ENCODE measurements at regions of chr11 and their contacts with region 1.

Region 1: DNA sequence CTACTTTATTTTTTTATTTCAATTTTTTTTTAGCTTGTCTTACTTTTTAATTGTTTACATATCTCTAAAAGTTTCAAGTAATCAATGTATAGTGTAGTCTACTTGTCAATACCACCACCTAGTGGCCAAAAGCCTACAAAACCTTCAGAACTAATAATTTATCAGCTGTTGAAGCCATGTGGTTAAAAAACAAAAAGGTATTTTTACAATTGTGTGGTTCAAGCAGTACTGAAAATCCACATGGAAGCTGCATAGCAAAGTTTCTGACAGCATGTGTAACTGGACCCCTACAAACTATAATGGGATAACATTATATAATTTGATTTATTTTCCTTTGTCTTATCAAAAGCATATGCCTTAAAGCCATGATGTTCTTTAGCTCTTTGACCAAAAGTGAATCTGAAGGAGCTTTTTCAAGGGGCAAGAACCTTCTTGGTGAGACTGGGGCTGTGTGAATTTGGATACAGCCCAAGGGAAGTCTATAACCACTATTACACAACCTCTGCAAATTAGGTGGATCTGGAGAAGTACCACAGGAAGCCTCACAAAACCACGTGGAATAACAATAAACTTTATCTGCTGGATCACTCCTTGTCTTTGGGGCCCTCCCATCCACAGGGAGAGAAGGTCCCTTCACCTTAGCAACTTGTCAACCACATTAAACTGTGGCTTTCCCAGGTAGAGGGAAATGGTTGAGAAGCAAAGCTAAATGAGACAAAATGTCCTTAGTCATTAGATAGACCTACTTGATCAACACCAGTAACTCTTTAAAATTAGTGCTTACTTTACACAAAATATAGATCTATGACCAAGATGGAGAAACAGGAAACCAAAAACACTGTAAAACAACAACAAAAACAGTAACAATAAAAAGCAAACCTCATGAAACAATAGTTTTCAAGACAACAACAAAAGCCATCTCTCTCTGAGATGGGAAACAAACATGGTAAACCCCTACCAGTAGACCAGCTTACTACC is 9.9 kb downstream of the NARS2 start:
- DNase-seq: peak in 7 of 9 donors; percentile 37 to 66 (median 60)
- ATAC-seq: peak; percentile 83
- H3K4me3 ChIP-seq: no peak overlapping the region
- H3K4me3 Mint-ChIP-seq: peak overlapping the region in 2 of 10 donors; percentile 23 to 31
- H3K27ac ChIP-seq: no peak overlapping the region
- H3K27ac Mint-ChIP-seq: peak overlapping the region in 5 of 9 donors; percentile 30 to 84 (median 58)
- H3K4me1 ChIP-seq: peaks cover 0 to 13% of the 10 kb centered on the region in 2 donors
- H3K4me1 Mint-ChIP-seq: peaks cover 22 to 50% (median 36%) of the 10 kb centered on the region in 7 donors
- H3K27me3 ChIP-seq: no peaks in the 10 kb centered on the region
- H3K27me3 Mint-ChIP-seq: no peaks in the 10 kb centered on the region

Region 2: GRCh38 chr11:78045851-78046485 is 518.8 kb before region 1 on chr11:
- CTCF ChIA-PET with region 1: no interaction called
- POLR2A ChIA-PET with region 1: no interaction called
- intact Hi-C with region 1: loop called in 1 of 2 experiments (anchors 1 kb)
- DNase-seq: peak; percentile 66 to 92 (median 83)
- ATAC-seq: peak; percentile 97
- H3K4me3 ChIP-seq: peak overlapping the region; percentile 57
- H3K4me3 Mint-ChIP-seq: peak overlapping the region; percentile 49 to 78 (median 73)
- H3K27ac ChIP-seq: no peak overlapping the region
- H3K27ac Mint-ChIP-seq: peak overlapping the region in 4 of 9 donors; percentile 4 to 67 (median 43)
- H3K4me1 ChIP-seq: peaks cover 0 to 10% of the 10 kb centered on the region in 2 donors
- H3K4me1 Mint-ChIP-seq: peaks cover 4 to 17% (median 9%) of the 10 kb centered on the region in 7 donors
- H3K27me3 ChIP-seq: no peaks in the 10 kb centered on the region
- H3K27me3 Mint-ChIP-seq: no peaks in the 10 kb centered on the region

Region 3: GRCh38 chr11:78139422-78140391 is 425.1 kb before region 1 on chr11 and contains the start of gene ALG8:
- CTCF ChIA-PET with region 1: interaction called, 3 read pairs
- POLR2A ChIA-PET with region 1: no interaction called
- intact Hi-C with region 1: loop called (anchors 2 kb)
- DNase-seq: peak; percentile 94 to 97 (median 96)
- ATAC-seq: peak; percentile 95
- H3K4me3 ChIP-seq: peak within 1 kb of the TSS; percentile 88
- H3K4me3 Mint-ChIP-seq: peak within 1 kb of the TSS; percentile 85 to 98 (median 95)
- H3K27ac ChIP-seq: peak within 1 kb of the TSS; percentile 82
- H3K27ac Mint-ChIP-seq: peak within 1 kb of the TSS; percentile 87 to 98 (median 93)
- H3K4me1 ChIP-seq: peaks cover 8 to 13% of the 10 kb centered on the region in 2 donors
- H3K4me1 Mint-ChIP-seq: peaks cover 23 to 51% (median 42%) of the 10 kb centered on the region in 7 donors
- H3K27me3 ChIP-seq: no peaks in the 10 kb centered on the region
- H3K27me3 Mint-ChIP-seq: no peaks in the 10 kb centered on the region
- total RNA-seq, gene ALG8: 27.2 to 53.8 (median 30.8) TPM

Region 4: GRCh38 chr11:78228467-78228866 is 336.3 kb before region 1 on chr11:
- CTCF ChIA-PET with region 1: interaction called, 9 read pairs
- POLR2A ChIA-PET with region 1: no interaction called
- intact Hi-C with region 1: loop called (anchors 1 kb)
- DNase-seq: peak in 2 of 9 donors; percentile 18 to 21
- ATAC-seq: peak; percentile 76
- H3K4me3 ChIP-seq: no peak overlapping the region
- H3K4me3 Mint-ChIP-seq: no peak overlapping the region
- H3K27ac ChIP-seq: no peak overlapping the region
- H3K27ac Mint-ChIP-seq: peak overlapping the region in 2 of 9 donors; percentile 57 to 65
- H3K4me1 ChIP-seq: no peaks in the 10 kb centered on the region
- H3K4me1 Mint-ChIP-seq: peaks cover 6 to 61% (median 9%) of the 10 kb centered on the region in 7 donors
- H3K27me3 ChIP-seq: no peaks in the 10 kb centered on the region
- H3K27me3 Mint-ChIP-seq: no peaks in the 10 kb centered on the region

Region 5: GRCh38 chr11:78332174-78332866 is 232.5 kb before region 1 on chr11:
- CTCF ChIA-PET with region 1: no interaction called
- POLR2A ChIA-PET with region 1: no interaction called
- intact Hi-C with region 1: loop called in 1 of 2 experiments (anchors 5 kb)
- DNase-seq: no peak
- ATAC-seq: peak; percentile 48
- H3K4me3 ChIP-seq: no peak overlapping the region
- H3K4me3 Mint-ChIP-seq: peak overlapping the region in 1 of 10 donors; percentile 45
- H3K27ac ChIP-seq: no peak overlapping the region
- H3K27ac Mint-ChIP-seq: peak overlapping the region in 2 of 9 donors; percentile 19 to 65
- H3K4me1 ChIP-seq: no peaks in the 10 kb centered on the region
- H3K4me1 Mint-ChIP-seq: peaks cover 0 to 73% (median 0%) of the 10 kb centered on the region in 7 donors
- H3K27me3 ChIP-seq: no peaks in the 10 kb centered on the region
- H3K27me3 Mint-ChIP-seq: peaks cover 0 to 2% (median 0%) of the 10 kb centered on the region in 5 donors

Region 6: GRCh38 chr11:79600711-79601110 is 1035.9 kb after region 1 on chr11:
- CTCF ChIA-PET with region 1: no interaction called
- POLR2A ChIA-PET with region 1: no interaction called
- intact Hi-C with region 1: no loop called
- DNase-seq: no peak
- ATAC-seq: no peak
- H3K4me3 ChIP-seq: no peak overlapping the region
- H3K4me3 Mint-ChIP-seq: no peak overlapping the region
- H3K27ac ChIP-seq: no peak overlapping the region
- H3K27ac Mint-ChIP-seq: no peak overlapping the region
- H3K4me1 ChIP-seq: no peaks in the 10 kb centered on the region
- H3K4me1 Mint-ChIP-seq: no peaks in the 10 kb centered on the region
- H3K27me3 ChIP-seq: no peaks in the 10 kb centered on the region
- H3K27me3 Mint-ChIP-seq: peaks cover 0 to 5% (median 0%) of the 10 kb centered on the region in 5 donors